ENCODE measurements at regions of chr17 and their contacts with region 1.

Region 1: DNA sequence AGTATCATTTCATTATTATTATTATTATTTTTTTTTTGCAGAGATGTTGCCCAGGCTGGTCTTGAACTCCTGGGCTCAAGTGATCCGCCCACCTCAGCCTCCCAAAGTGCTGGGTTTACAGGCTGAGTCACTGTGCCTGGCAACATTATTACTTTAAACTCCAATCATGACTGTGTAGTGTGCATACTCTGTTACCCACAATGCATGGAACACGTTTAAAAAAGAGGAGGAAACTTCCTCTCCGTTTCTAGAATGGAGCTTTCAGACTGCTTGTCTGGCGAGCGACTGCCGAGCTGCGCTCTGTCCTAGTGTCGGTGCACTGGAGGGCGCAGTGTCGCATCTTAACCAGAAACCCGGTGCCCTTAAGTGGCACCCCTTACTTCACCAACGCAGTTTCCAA is 22.1 kb upstream of the FASN start:
- DNase-seq: no peak
- H3K4me3 ChIP-seq: no peak overlapping the region
- H3K27ac ChIP-seq: no peak overlapping the region
- H3K4me1 ChIP-seq: no peaks in the 10 kb centered on the region
- H3K27me3 ChIP-seq: no peaks in the 10 kb centered on the region
- CTCF ChIP-seq: no peak

Region 2: DNA sequence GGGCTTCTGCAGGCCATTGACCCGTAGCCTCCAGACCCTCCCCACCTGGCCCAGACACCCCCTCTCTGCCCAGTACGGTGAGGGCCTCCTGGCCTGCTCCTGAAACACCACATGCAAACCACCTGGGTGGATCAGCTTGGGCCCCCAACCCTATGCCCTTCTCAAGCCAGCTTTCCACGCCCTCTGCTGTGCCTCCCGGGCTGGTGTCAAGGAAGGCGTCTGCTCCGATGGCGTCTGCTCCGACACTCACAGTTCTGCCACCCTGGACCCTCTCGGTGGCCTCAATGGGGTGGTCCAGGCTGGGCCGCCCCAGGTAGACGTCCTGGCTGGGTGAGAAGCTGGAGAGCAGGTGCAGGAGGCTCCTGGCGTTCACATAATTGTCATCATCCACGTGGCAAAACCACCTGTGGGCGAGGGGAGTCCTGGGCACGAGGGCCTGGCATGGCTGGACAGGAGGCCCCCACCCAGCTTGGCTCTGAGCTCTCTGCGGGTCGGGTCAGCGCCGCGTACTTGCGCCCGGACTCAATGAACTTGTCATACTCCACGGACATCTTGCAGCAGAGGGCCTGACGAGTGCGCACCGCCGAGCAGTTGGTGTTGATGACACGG is 69.9 kb before region 1 on chr17:
- CTCF ChIA-PET with region 1: interaction called, 12 read pairs
- POLR2A ChIA-PET with region 1: no interaction called
- intact Hi-C with region 1: no loop called
- DNase-seq: no peak
- H3K4me3 ChIP-seq: no peak overlapping the region
- H3K27ac ChIP-seq: no peak overlapping the region
- H3K4me1 ChIP-seq: no peaks in the 10 kb centered on the region
- H3K27me3 ChIP-seq: no peaks in the 10 kb centered on the region
- CTCF ChIP-seq: no peak

Region 3: DNA sequence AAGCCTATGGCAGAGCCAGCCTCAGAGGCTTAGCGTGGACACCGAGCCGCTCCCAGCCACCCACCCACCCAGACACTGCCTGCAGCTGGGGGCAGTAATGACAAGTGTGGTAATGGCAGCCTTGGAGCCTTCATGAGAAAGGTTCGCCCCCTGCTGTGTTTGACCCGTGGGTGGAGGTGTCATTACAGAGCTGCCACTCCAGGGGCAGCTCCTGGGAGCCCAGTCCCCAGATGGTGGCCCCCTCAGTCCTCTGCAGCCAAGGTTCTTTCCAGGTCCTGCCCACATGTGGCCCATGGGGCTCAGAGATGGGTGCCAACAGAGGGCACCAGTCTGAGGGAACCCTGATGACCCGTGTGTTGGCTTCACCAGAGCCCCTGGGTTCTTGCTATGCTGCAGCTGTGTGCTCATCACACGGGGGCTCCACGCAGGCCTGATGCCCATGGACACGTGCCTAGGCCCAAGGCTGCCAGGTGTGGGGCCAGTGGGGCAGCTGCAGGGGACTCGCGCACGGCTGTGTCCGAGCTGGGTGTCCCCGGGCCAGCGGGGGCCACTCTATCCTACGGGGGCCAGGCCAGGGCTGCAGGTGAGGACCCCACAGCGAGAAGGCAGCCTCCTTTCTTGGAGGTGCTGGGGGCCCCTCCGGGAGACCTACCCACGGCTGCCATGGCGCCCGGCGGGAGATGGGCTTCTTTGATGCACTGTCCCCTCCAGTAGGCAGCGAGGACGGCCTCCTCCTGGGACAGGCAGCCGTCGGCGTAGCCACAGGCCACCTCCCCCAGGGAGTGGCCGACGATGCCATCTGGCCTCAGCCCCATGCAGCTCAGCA is 30.2 kb before region 1 on chr17:
- CTCF ChIA-PET with region 1: interaction called, 3 read pairs
- POLR2A ChIA-PET with region 1: interaction called, 24 read pairs
- intact Hi-C with region 1: no loop called
- DNase-seq: no peak
- H3K4me3 ChIP-seq: no peak overlapping the region
- H3K27ac ChIP-seq: no peak overlapping the region
- H3K4me1 ChIP-seq: no peaks in the 10 kb centered on the region
- H3K27me3 ChIP-seq: no peaks in the 10 kb centered on the region
- CTCF ChIP-seq: no peak

Measured in PC-9 (cell line).